ENCODE measurements at regions of chr1 and their contacts with region 1.

Region 1: GRCh38 chr1:47926461-47926999 is 70.7 kb downstream of the TRABD2B start:
- DNase-seq: no peak
- ATAC-seq: no peak
- H3K4me3 ChIP-seq: no peak overlapping the region
- H3K27ac ChIP-seq: no peak overlapping the region
- H3K4me1 ChIP-seq: no peaks in the 10 kb centered on the region
- H3K27me3 ChIP-seq: peaks cover 6% of the 10 kb centered on the region
- CTCF ChIP-seq: no peak

Region 2: DNA sequence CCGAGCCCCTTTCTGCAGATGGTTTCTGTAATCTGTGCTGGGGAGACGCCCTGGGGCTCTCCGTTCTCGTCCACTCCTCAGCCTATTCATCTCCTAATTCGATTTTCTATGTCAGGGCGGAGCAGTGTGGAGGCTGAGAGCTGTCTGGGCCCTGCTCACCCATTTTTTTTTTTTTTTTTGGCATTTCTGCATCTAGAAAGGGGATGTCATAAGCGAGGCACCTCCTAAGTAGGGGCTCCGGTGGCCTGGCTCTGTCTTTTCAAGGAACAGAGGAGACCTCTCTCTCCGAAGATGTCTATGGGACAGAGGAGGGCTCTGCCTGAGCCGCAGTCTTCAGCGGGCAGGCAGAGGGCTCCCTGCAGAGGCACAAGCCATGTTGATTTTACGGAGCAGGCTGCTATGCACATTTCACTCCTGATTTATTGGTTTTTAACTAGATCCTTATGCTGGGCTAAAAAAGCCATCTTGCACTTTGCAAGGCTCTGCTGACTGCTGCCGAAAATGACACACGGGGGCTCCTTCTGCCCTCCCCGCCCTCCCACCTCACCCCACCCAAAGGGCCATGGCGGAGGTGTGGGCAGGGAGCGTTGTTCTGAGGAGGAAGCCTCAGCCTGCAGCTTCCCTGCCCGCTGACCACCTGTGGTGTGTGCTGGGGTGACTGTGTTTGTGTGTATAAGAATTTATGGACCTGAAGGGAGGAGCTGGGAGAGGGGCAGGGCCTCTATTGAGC is 417.7 kb before region 1 on chr1:
- CTCF ChIA-PET with region 1: no interaction called
- POLR2A ChIA-PET with region 1: no interaction called
- in situ Hi-C with region 1: no loop called
- intact Hi-C with region 1: no loop called
- DNase-seq: no peak
- ATAC-seq: peak; percentile 66
- H3K4me3 ChIP-seq: peak overlapping the region; percentile 38
- H3K27ac ChIP-seq: no peak overlapping the region
- H3K4me1 ChIP-seq: peaks cover 6% of the 10 kb centered on the region; the same call in 1 of the 2 replicates
- H3K27me3 ChIP-seq: peaks cover 22% of the 10 kb centered on the region
- CTCF ChIP-seq: no peak

Region 3: DNA sequence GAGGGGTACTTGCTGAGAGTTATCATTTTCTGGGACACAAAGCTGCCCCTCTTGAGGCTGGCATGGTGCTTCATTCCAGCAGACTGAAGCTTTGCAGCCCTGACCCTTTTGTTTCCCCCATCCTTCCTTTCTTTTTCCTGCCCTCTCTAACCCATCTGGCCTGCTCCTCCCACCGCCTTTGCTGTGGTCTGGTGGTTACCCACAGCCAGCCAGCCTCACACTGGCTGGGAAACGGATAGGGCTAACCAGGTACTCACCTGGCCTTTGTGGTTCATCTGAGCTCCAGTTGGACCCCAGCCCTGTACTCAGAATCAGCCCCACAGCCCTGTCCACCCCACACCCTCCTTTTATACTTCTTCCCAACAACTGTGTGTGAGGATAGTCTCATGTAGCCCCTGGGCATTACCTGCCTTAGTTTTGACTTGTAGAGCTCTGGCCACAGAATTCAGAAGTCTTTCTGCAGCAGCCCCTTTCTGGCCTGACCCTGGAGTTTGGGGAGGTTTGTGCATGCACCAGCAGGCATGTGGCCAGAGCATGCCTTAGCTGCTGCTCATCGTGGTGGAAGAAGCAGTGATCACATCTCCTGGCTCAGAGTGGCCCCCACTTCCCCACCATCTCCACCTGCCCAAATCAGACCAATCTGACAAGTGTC is 67.3 kb before region 1 on chr1:
- CTCF ChIA-PET with region 1: no interaction called
- POLR2A ChIA-PET with region 1: no interaction called
- in situ Hi-C with region 1: no loop called
- intact Hi-C with region 1: no loop called
- DNase-seq: no peak
- ATAC-seq: no peak
- H3K4me3 ChIP-seq: no peak overlapping the region
- H3K27ac ChIP-seq: no peak overlapping the region
- H3K4me1 ChIP-seq: no peaks in the 10 kb centered on the region
- H3K27me3 ChIP-seq: no peaks in the 10 kb centered on the region
- CTCF ChIP-seq: no peak

Region 4: DNA sequence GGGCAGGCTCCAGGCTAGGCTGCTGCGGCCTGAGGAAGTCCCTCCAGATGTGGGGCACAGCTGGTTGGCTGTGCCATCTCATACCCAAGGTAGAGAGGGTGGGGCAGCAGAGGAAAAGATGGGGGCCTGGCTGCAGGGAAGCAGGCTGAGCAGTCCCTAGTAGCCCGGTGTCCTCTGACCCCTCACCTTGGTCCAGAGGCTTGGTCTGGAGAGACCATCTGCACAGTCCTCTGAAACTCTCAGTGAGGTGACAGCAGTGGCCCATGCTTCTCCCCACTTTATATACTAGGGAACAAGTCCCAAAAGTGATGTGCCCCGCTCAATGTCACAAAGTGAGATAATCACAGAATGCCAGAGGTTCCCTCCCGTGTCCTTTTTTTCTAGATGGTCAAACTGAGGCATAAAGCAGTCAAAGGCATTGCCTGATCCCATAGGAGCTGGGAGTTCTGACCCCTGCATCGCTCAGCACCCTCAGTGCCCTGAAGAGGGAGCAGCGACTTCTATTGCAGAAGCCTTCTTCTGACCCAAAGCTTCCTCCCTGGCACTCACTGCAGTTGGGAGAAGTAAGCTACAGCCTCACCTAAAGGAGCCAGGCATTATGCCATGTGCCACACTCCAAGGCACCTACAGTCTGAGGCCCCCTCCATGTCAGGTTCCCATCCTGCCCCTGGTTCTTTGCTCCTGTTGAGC is 25.2 kb after region 1 on chr1:
- CTCF ChIA-PET with region 1: no interaction called
- POLR2A ChIA-PET with region 1: no interaction called
- in situ Hi-C with region 1: no loop called
- intact Hi-C with region 1: loop called (anchors 1 kb)
- DNase-seq: no peak
- ATAC-seq: no peak
- H3K4me3 ChIP-seq: no peak overlapping the region
- H3K27ac ChIP-seq: no peak overlapping the region
- H3K4me1 ChIP-seq: no peaks in the 10 kb centered on the region
- H3K27me3 ChIP-seq: no peaks in the 10 kb centered on the region
- CTCF ChIP-seq: peak; percentile 19; the same call in 1 of the 2 replicates

Measured in Panc1 (cell line).